Natural killer cell (primary cell): ENCODE measurements at regions of chr16 and their contacts with region 1.

Region 1: GRCh38 chr16:74813109-74813641 is 38.6 kb upstream of the FA2H start:
- DNase-seq: peak; percentile 60 to 81
- ATAC-seq: peak; percentile 89 to 100 (median 95)
- H3K4me3 ChIP-seq: no peak overlapping the region
- H3K4me3 Mint-ChIP-seq: no peak overlapping the region
- H3K27ac ChIP-seq: no peak overlapping the region
- H3K27ac Mint-ChIP-seq: no peak overlapping the region
- H3K4me1 ChIP-seq: peaks cover 3% of the 10 kb centered on the region
- H3K4me1 Mint-ChIP-seq: peaks cover 4 to 6% of the 10 kb centered on the region in 2 donors
- H3K27me3 ChIP-seq: no peaks in the 10 kb centered on the region
- H3K27me3 Mint-ChIP-seq: peaks cover 0 to 5% of the 10 kb centered on the region in 2 donors
- CTCF ChIP-seq: peak; percentile 86

Region 2: DNA sequence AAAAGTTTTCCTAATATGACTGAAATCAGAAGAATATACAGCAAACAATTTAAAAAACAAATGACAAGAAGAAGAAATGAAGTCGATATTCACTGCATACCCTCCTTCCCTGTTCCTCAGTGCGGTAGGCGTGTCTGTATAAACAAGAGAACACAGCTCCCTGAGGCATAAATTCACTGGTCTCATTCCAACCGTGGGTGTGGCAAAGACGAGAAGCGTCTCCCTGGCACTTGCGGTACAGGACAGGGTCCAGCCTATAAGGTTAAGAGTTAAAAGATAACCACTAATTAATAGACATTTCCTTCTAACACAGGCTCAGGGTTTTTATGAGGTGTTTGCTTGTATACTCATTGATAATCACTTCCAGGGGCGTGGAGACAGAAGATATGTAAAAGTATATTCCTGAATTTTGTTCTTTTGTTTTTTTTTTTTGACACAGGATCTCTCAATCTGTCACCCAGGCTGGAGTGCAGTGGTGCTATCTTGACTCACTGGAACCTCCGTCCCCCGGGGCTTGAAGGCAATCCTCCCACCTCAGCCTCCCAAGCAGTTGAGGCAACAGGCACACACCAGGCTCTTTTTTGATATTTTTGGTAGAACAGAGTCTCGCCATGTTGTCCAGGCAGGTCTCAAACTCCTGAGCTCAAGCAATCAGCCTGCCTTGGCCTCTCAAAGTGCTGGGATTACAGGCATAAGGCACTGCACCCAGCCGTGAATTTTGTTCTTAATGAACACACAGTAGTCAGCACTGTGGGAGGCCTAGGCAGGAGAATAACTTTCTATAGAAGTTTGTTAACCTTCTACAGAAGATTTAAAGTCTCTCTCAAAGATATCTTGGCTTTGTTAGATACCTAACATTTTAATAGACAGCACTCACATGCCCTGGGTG is 332.8 kb before region 1 on chr16:
- intact Hi-C with region 1: no loop called
- DNase-seq: no peak
- ATAC-seq: no peak
- H3K4me3 ChIP-seq: no peak overlapping the region
- H3K4me3 Mint-ChIP-seq: no peak overlapping the region
- H3K27ac ChIP-seq: no peak overlapping the region
- H3K27ac Mint-ChIP-seq: peak overlapping the region; percentile 63
- H3K4me1 ChIP-seq: no peaks in the 10 kb centered on the region
- H3K4me1 Mint-ChIP-seq: peaks cover 5 to 10% of the 10 kb centered on the region in 2 donors
- H3K27me3 ChIP-seq: no peaks in the 10 kb centered on the region
- H3K27me3 Mint-ChIP-seq: no peaks in the 10 kb centered on the region
- CTCF ChIP-seq: no peak

Region 3: DNA sequence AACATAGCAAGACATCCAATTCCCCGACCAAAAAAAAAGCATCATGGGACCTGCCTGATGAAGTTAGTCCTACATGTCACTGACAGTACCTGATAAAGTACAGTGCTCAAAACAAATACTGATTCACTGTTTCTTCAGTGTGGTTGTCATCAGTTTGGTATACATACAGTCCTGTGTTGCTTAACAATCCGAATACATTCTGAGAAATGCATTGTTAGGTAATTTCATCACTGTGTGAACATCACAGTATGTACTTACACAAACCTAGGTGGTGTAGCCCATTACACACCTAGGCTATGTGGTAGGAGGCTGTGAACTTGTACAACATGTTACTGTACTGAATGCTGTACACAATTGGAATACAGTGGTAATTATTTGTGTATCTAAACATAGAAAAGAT is 19.6 kb before region 1 on chr16:
- intact Hi-C with region 1: no loop called
- DNase-seq: no peak
- ATAC-seq: no peak
- H3K4me3 ChIP-seq: no peak overlapping the region
- H3K4me3 Mint-ChIP-seq: no peak overlapping the region
- H3K27ac ChIP-seq: no peak overlapping the region
- H3K27ac Mint-ChIP-seq: no peak overlapping the region
- H3K4me1 ChIP-seq: no peaks in the 10 kb centered on the region
- H3K4me1 Mint-ChIP-seq: no peaks in the 10 kb centered on the region
- H3K27me3 ChIP-seq: peaks cover 3% of the 10 kb centered on the region
- H3K27me3 Mint-ChIP-seq: peaks cover 22 to 39% of the 10 kb centered on the region in 2 donors
- CTCF ChIP-seq: no peak

Region 4: GRCh38 chr16:75110637-75111513 is 297.7 kb after region 1 on chr16:
- intact Hi-C with region 1: loop called (anchors 1 kb)
- DNase-seq: peak; percentile 76 to 92
- ATAC-seq: peak; percentile 92 to 99 (median 97)
- H3K4me3 ChIP-seq: no peak overlapping the region
- H3K4me3 Mint-ChIP-seq: no peak overlapping the region
- H3K27ac ChIP-seq: no peak overlapping the region
- H3K27ac Mint-ChIP-seq: peak overlapping the region in 1 of 2 donors; percentile 31
- H3K4me1 ChIP-seq: peaks cover 37% of the 10 kb centered on the region
- H3K4me1 Mint-ChIP-seq: peaks cover 0 to 20% of the 10 kb centered on the region in 2 donors
- H3K27me3 ChIP-seq: peaks cover 6% of the 10 kb centered on the region
- H3K27me3 Mint-ChIP-seq: peaks cover 24 to 42% of the 10 kb centered on the region in 2 donors
- CTCF ChIP-seq: peak; percentile 78